ENCODE measurements at regions of chr3 and their contacts with region 1.

Region 1: DNA sequence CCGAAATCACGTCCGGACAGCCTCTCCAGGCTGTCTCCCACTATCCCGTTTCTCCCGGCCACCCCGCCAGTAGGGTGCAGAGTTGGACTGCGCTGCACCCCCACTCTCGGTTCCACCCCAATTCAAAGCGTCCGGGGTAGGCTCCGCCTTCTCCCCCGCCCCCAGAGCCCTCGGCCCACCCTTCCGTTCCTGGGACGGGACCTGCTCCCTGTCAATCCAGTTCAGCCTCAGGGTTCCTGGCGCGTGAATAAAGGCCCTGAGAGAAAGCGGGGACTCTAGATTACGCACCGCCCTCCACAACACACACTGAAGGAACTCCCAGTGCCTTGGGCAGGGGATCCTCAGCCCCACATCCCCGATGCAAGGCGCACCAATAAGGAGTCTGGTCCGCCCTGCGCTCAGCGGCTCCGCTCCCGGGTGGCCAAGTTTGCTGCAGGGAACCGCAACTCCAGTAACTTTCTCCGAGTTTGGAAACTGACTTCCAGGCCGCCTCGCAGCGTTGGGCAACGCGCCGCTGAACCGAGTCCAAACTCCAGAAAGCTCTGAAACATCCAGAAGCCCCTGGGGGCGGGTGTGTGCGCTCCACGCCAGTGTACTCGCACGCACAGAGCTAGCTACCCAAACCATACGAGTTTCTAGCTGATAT is 1.9 kb downstream of the ADAMTS9 start:
- DNase-seq: peak; percentile 95
- H3K4me3 ChIP-seq: peak overlapping the region; percentile 64 to 71 (median 69)
- H3K27ac ChIP-seq: peak overlapping the region; percentile 34
- H3K4me1 ChIP-seq: peaks cover 10% of the 10 kb centered on the region
- H3K27me3 ChIP-seq: no peaks in the 10 kb centered on the region
- CTCF ChIP-seq: peak; percentile 17 to 56

Region 2: GRCh38 chr3:64382153-64382552 is 303.8 kb before region 1 on chr3:
- CTCF ChIA-PET with region 1: no interaction called
- dilution Hi-C with region 1: no loop called
- in situ Hi-C with region 1: no loop called
- intact Hi-C with region 1: no loop called
- DNase-seq: no peak
- H3K4me3 ChIP-seq: no peak overlapping the region
- H3K27ac ChIP-seq: no peak overlapping the region
- H3K4me1 ChIP-seq: no peaks in the 10 kb centered on the region
- H3K27me3 ChIP-seq: no peaks in the 10 kb centered on the region
- CTCF ChIP-seq: no peak

Region 3: DNA sequence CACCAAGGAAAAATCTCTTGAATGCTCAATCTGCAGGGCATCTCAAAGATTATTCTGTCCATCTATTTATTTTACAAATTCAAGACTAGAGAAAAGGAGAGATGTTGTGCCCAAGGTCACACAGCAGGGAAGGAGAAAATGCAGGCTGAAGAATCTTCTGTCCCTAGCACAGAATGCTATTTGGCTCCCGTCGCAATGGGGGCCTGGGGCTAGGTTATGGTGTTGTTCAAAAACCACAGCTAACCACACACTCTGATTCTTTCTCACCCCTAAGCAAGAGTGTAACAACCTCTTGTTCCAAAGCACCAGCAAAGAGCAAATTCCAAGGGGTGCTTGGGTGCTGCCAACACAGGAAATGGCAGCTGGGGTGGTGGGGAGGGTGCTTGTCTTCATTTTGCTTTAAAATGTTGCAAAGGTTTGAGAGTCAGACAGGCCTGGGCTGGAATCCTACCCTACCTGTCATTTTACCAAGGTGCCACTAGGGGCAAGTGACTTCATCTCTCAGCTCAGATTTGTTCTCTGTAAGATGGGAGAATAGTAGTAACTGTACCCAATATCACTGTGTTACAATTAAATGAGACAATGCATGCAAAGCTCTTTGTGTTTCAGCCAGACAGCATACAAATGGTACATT is 110.6 kb before region 1 on chr3:
- CTCF ChIA-PET with region 1: no interaction called
- dilution Hi-C with region 1: no loop called
- in situ Hi-C with region 1: no loop called
- intact Hi-C with region 1: loop called (anchors 5 kb)
- DNase-seq: peak; percentile 27
- H3K4me3 ChIP-seq: no peak overlapping the region
- H3K27ac ChIP-seq: no peak overlapping the region
- H3K4me1 ChIP-seq: peaks cover 7% of the 10 kb centered on the region
- H3K27me3 ChIP-seq: no peaks in the 10 kb centered on the region
- CTCF ChIP-seq: peak; percentile 66 to 78

Region 4: GRCh38 chr3:64666171-64666588 is 19.7 kb before region 1 on chr3:
- CTCF ChIA-PET with region 1: no interaction called
- dilution Hi-C with region 1: no loop called
- in situ Hi-C with region 1: no loop called
- intact Hi-C with region 1: loop called (anchors 1 kb)
- DNase-seq: peak; percentile 16
- H3K4me3 ChIP-seq: no peak overlapping the region
- H3K27ac ChIP-seq: peak overlapping the region; percentile 40
- H3K4me1 ChIP-seq: peaks cover 13% of the 10 kb centered on the region
- H3K27me3 ChIP-seq: no peaks in the 10 kb centered on the region
- CTCF ChIP-seq: no peak

Region 5: DNA sequence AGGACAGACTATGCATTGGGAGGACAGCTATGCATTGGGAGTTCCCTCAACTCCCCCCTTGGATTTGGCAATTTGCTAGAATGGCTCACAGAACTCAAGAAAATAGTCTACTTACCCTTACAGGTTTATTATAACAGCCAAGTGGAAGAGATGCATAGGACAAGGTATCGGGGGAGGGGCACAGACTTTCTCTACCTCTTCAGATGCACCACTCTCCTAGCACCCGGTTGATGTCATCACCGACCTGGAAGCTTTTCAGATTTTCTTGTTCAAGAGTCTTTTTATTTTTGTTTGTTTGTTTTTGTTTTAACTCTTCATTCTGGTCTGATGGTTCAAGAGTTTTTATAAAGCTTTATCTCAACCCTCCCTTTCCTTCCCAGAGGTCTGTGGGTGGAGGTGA is 22.5 kb after region 1 on chr3:
- CTCF ChIA-PET with region 1: no interaction called
- dilution Hi-C with region 1: no loop called
- in situ Hi-C with region 1: no loop called
- intact Hi-C with region 1: no loop called
- DNase-seq: no peak
- H3K4me3 ChIP-seq: no peak overlapping the region
- H3K27ac ChIP-seq: no peak overlapping the region
- H3K4me1 ChIP-seq: no peaks in the 10 kb centered on the region
- H3K27me3 ChIP-seq: peaks cover 2% of the 10 kb centered on the region
- CTCF ChIP-seq: no peak

Region 6: GRCh38 chr3:64718976-64719375 is 33.1 kb after region 1 on chr3:
- CTCF ChIA-PET with region 1: no interaction called
- dilution Hi-C with region 1: no loop called
- in situ Hi-C with region 1: no loop called
- intact Hi-C with region 1: no loop called
- DNase-seq: no peak
- H3K4me3 ChIP-seq: no peak overlapping the region
- H3K27ac ChIP-seq: no peak overlapping the region
- H3K4me1 ChIP-seq: no peaks in the 10 kb centered on the region
- H3K27me3 ChIP-seq: no peaks in the 10 kb centered on the region
- CTCF ChIP-seq: no peak

Region 7: DNA sequence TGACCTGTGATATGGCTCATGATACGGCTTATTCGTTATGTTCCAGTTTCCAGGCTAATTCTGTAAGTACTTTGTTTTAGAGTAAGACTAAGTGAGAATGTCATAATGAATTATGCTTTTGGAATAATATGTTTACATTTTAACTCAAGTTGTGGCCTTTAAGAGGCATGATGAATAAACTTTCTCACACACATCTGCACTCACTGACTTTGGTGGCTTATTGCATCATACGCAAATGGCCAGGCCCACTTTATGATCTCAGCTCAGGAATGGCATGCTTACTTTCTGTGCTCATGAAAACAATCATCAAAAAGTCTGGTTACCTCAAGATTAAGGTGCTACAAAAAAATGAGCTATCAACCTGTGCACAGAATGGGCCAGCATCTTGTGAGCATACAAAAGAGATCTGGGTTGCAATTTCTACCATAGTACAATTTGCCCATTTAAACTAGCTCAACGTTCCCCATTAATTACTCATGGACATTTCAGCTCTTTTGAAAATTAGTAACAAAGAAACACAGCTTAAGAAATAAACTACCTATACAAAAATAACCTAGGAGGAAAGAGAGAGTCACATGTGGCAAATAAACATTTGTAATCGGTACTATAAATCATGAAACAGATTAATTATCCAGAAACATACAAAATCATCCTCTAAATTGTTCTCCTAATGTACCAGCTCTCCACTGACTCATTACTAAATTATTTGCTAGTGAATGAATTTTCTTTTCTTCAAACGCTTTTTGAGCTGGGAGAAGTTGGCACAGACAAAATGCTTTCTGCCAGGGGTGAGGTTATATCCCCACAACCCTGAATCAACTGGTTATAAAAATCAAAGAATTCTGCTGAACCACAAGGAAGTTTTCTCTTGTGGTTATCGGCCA is 440.8 kb after region 1 on chr3:
- CTCF ChIA-PET with region 1: no interaction called
- dilution Hi-C with region 1: no loop called
- in situ Hi-C with region 1: no loop called
- intact Hi-C with region 1: loop called (anchors 5 kb)
- DNase-seq: peak; percentile 84
- H3K4me3 ChIP-seq: peak overlapping the region in 1 of 3 experiments; percentile 19
- H3K27ac ChIP-seq: peak overlapping the region; percentile 83
- H3K4me1 ChIP-seq: peaks cover 31% of the 10 kb centered on the region
- H3K27me3 ChIP-seq: no peaks in the 10 kb centered on the region
- CTCF ChIP-seq: no peak

Region 8: GRCh38 chr3:65170390-65171042 is 484.6 kb after region 1 on chr3:
- CTCF ChIA-PET with region 1: no interaction called
- dilution Hi-C with region 1: no loop called
- in situ Hi-C with region 1: no loop called
- intact Hi-C with region 1: loop called (anchors 1 kb)
- DNase-seq: peak; percentile 82
- H3K4me3 ChIP-seq: no peak overlapping the region
- H3K27ac ChIP-seq: peak overlapping the region; percentile 39
- H3K4me1 ChIP-seq: peaks cover 5% of the 10 kb centered on the region
- H3K27me3 ChIP-seq: no peaks in the 10 kb centered on the region
- CTCF ChIP-seq: peak; percentile 24 to 58

Region 9: GRCh38 chr3:65245133-65246063 is 559.5 kb after region 1 on chr3:
- CTCF ChIA-PET with region 1: no interaction called
- dilution Hi-C with region 1: no loop called
- in situ Hi-C with region 1: no loop called
- intact Hi-C with region 1: loop called (anchors 1 kb)
- DNase-seq: peak; percentile 18
- H3K4me3 ChIP-seq: no peak overlapping the region
- H3K27ac ChIP-seq: no peak overlapping the region
- H3K4me1 ChIP-seq: no peaks in the 10 kb centered on the region
- H3K27me3 ChIP-seq: peaks cover 2% of the 10 kb centered on the region
- CTCF ChIP-seq: peak; percentile 52 to 53